GM12878 (cell line): ENCODE measurements at regions of chr16 and their contacts with region 1.

Region 1: DNA sequence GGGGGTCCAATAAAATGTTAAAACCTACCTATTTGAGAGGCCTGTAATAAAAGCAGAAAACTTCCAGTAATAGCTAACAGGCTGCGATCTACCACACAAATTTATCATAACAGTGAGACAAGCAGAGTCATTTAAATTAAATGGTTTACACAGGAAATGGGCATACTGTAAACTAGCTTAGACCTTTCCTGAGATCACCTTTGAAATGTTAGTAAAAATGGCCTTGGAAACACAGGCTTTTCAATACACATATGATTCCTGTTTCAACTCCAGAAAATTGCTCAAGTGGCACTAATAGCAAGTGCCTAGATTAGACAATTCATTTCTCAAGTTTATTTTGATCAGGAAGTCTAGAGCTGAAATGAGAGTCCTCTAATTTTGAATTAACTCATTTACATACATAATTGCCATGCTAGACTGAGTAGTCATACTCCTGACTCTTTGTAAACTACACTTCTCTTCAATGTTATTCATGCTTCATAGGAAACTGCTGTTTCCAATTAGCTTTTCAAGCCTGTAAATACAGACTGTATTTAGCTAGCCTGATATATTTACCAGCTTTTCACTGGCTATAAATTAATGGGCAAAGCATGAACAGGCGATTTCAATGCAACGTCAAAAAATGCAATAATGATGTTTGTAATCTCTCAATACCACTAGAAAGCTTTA is 43.3 kb downstream of the PARN start:
- DNase-seq: no peak
- ATAC-seq: no peak
- H3K4me3 ChIP-seq: no peak overlapping the region
- H3K27ac ChIP-seq: no peak overlapping the region
- H3K4me1 ChIP-seq: no peaks in the 10 kb centered on the region
- H3K27me3 ChIP-seq: no peaks in the 10 kb centered on the region
- CTCF ChIP-seq: no peak
- EP300 ChIP-seq: no peak
- POLR2A ChIP-seq: no peak
- RAD21 ChIP-seq: no peak

Region 2: GRCh38 chr16:14559809-14560241 is 26.9 kb before region 1 on chr16:
- CTCF ChIA-PET with region 1: no interaction called
- POLR2A ChIA-PET with region 1: interaction called, 12 read pairs
- RAD21 ChIA-PET with region 1: no interaction called
- SMC1A ChIA-PET with region 1: interaction called, 3 read pairs
- in situ Hi-C with region 1: no loop called
- intact Hi-C with region 1: no loop called
- DNase-seq: no peak
- ATAC-seq: no peak
- H3K4me3 ChIP-seq: no peak overlapping the region
- H3K27ac ChIP-seq: no peak overlapping the region
- H3K4me1 ChIP-seq: no peaks in the 10 kb centered on the region
- H3K27me3 ChIP-seq: no peaks in the 10 kb centered on the region
- CTCF ChIP-seq: no peak
- EP300 ChIP-seq: no peak
- POLR2A ChIP-seq: no peak
- RAD21 ChIP-seq: no peak

Region 3: DNA sequence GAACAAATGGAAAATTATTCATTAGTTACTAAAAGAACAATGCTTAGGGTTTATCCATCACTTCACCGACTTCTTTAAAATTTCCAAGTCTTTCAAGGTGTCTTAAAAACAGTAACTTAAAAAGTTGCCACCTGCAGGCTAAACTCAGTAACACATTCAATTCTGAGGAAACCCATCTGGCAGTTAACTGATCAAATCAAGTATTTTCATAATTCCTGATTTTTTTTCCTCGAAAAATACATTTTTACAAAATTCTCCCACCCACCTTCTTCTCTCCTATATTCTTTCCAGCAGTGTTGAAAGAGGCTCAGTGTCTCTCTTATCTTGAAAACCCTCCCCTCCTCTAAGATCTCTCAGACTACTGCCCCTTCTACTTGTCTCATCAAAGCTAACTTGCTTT is 13.4 kb after region 1 on chr16:
- CTCF ChIA-PET with region 1: interaction called, 11 read pairs
- POLR2A ChIA-PET with region 1: interaction called, 12 read pairs
- RAD21 ChIA-PET with region 1: no interaction called
- SMC1A ChIA-PET with region 1: interaction called, 9 read pairs
- in situ Hi-C with region 1: no loop called
- intact Hi-C with region 1: no loop called
- DNase-seq: no peak
- ATAC-seq: peak; percentile 61
- H3K4me3 ChIP-seq: no peak overlapping the region
- H3K27ac ChIP-seq: no peak overlapping the region
- H3K4me1 ChIP-seq: no peaks in the 10 kb centered on the region
- H3K27me3 ChIP-seq: no peaks in the 10 kb centered on the region
- CTCF ChIP-seq: peak; percentile 17 to 41 (median 33); a peak in 5 of 6 replicates
- EP300 ChIP-seq: no peak
- POLR2A ChIP-seq: no peak
- RAD21 ChIP-seq: peak; percentile 29; the same call in 1 of the 2 replicates